Activated CD8-positive, alpha-beta T cell treated with anti-CD3 and anti-CD28 coated beads, Interleukin-2, amount 10 ng/mL, durations not matched to agents 7 days and 5 days (primary cell): ENCODE measurements at regions of chr11 and their contacts with region 1.

Region 1: GRCh38 chr11:46489661-46490560 is 98.3 kb upstream of the CHRM4 start:
- DNase-seq: peak; percentile 60
- ATAC-seq: peak; percentile 85
- H3K4me3 Mint-ChIP-seq: no peak overlapping the region
- H3K27ac Mint-ChIP-seq: no peak overlapping the region
- H3K4me1 Mint-ChIP-seq: peaks cover 5% of the 10 kb centered on the region
- H3K27me3 Mint-ChIP-seq: no peaks in the 10 kb centered on the region

Region 2: DNA sequence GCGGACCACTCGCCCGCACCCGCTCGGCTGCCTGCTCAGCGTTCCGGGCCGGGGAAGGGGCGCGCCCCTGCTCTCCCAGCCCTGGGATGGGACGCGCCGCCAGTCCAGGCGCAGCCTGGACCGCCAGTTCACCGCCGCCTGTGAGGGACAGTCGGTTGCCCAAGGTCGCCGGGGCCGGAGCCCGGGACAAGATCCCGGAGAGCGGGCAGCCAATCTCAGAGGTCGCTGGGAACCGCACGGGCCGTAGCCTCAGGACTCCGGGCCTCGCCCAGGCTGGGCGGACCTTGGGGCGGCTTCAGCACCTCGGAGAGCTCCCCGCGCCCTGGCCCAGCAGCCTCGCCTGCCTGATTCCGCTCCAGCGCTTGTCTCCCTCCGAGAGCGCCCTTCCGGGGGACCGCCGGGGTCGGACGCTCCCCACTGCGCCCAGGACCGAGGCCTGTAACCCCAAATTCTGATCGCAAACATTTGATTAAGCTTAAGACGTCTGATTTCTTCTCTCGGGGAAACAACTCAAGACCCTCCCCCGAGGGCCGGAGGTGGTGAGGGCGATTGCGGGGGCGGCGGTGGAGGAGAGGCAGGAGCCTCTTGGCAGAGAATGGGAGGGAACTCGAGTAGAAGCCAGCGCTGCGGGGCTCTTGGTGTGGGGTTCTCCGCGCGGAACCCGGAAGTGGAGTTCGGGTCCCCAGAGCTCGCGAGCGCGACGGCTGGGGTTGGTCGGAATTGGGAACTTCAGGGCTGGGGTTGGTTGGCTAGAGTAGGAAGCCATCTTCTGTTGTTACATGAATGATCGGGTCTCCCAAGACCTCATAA is 97.3 kb before region 1 on chr11:
- CTCF ChIA-PET with region 1: interaction called, 13 read pairs
- POLR2A ChIA-PET with region 1: no interaction called
- DNase-seq: peak; percentile 86
- ATAC-seq: peak; percentile 85
- H3K4me3 Mint-ChIP-seq: peak overlapping the region; percentile 66
- H3K27ac Mint-ChIP-seq: no peak overlapping the region
- H3K4me1 Mint-ChIP-seq: peaks cover 28% of the 10 kb centered on the region
- H3K27me3 Mint-ChIP-seq: peaks cover 43% of the 10 kb centered on the region

Region 3: DNA sequence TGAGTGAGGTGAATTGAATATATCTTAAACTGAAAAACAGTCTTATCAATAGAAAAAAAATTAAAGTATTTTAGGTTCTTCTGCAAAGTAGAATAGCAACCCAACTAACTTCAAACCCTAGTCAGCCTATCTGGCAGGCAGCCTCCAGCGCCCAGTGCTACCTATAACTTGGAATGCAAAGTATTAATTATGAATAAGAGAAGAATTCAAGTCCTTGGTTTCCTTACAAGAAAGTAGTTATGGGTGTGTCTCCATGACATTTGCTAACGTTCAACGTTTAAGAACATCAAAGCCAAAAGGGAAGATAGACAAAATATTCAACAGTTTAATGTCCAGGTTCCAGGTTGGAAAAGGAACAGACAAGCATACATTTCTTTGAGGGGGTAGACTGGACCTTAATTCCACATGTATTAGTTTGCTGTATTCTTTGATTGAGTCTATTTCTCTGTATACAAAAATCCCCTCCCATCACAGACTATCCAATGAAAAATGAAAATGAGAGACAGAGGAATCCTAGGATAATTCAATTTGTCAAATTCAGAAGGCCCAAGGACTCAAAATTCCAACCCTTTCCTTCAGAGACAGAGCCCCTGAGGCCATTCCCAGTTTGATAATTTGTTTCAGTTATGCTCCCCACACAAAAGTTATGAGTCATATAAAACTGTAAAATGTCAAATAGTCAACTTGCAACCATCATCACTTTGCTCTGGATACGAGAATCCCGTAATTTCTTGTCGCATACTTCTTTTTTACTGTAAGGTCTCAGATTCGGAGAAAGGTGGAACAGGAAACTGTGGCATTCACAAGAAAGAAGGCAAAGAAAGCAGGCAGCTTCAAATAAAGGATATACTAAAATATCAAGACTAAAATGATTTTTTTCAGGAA is 14.6 kb before region 1 on chr11:
- CTCF ChIA-PET with region 1: interaction called, 22 read pairs
- POLR2A ChIA-PET with region 1: no interaction called
- DNase-seq: no peak
- ATAC-seq: no peak
- H3K4me3 Mint-ChIP-seq: no peak overlapping the region
- H3K27ac Mint-ChIP-seq: no peak overlapping the region
- H3K4me1 Mint-ChIP-seq: peaks cover 27% of the 10 kb centered on the region
- H3K27me3 Mint-ChIP-seq: no peaks in the 10 kb centered on the region

Region 4: GRCh38 chr11:46505741-46506482 is 16.0 kb after region 1 on chr11:
- CTCF ChIA-PET with region 1: interaction called, 30 read pairs
- POLR2A ChIA-PET with region 1: no interaction called
- DNase-seq: no peak
- ATAC-seq: no peak
- H3K4me3 Mint-ChIP-seq: no peak overlapping the region
- H3K27ac Mint-ChIP-seq: no peak overlapping the region
- H3K4me1 Mint-ChIP-seq: peaks cover 8% of the 10 kb centered on the region
- H3K27me3 Mint-ChIP-seq: no peaks in the 10 kb centered on the region

Region 5: GRCh38 chr11:46529095-46529905 is 39.4 kb after region 1 on chr11:
- CTCF ChIA-PET with region 1: interaction called, 24 read pairs
- POLR2A ChIA-PET with region 1: no interaction called
- DNase-seq: peak; percentile 85
- ATAC-seq: peak; percentile 92
- H3K4me3 Mint-ChIP-seq: no peak overlapping the region
- H3K27ac Mint-ChIP-seq: no peak overlapping the region
- H3K4me1 Mint-ChIP-seq: peaks cover 17% of the 10 kb centered on the region
- H3K27me3 Mint-ChIP-seq: no peaks in the 10 kb centered on the region